Activated T-helper 1 cell treated with anti-CD3 and anti-CD28 coated beads, Interleukin-12 subunit alpha, Interleukin-12 subunit beta, Interleukin-2, Interleukin-4 antibody, amounts not matched to agents 30 ng/mL and 10 ng/mL and 1 ng/mL, durations not matched to agents 14 hours and 24 hours and 36 hours (primary cell): ENCODE measurements at regions of chr7 and their contacts with region 1.

Region 1: DNA sequence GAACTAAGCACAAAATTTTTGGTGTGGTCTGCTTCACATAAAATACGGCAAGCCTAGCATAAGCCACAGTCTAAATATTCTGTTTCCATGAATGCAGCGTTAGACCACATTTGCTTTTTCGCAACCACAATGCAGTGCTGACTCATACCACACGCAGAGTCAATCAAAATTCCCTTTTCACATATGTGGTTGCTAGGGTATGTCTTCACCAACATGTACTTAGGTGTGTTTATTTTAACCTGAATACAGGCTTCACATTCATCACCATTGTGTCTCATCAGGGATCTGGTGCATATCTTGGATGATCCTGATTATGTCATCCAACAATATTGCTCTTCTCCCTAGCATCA is 90.8 kb downstream of the CHN2 start:
- DNase-seq: peak; percentile 55
- H3K4me3 Mint-ChIP-seq: no peak overlapping the region
- H3K27ac Mint-ChIP-seq: peak overlapping the region; percentile 1
- H3K4me1 Mint-ChIP-seq: peaks cover 23% of the 10 kb centered on the region
- H3K27me3 Mint-ChIP-seq: peaks cover 41% of the 10 kb centered on the region

Region 2: GRCh38 chr7:29113384-29114103 is 171.9 kb before region 1 on chr7:
- intact Hi-C with region 1: loop called (anchors 2 kb)
- DNase-seq: no peak
- H3K4me3 Mint-ChIP-seq: no peak overlapping the region
- H3K27ac Mint-ChIP-seq: peak overlapping the region; percentile 44
- H3K4me1 Mint-ChIP-seq: peaks cover 12% of the 10 kb centered on the region
- H3K27me3 Mint-ChIP-seq: peaks cover 24% of the 10 kb centered on the region

Region 3: GRCh38 chr7:29194594-29195427 is 90.6 kb before region 1 on chr7 and contains the start of gene CHN2:
- intact Hi-C with region 1: loop called (anchors 5 kb)
- DNase-seq: peak; percentile 12
- H3K4me3 Mint-ChIP-seq: peak within 1 kb of the TSS; percentile 78
- H3K27ac Mint-ChIP-seq: no peak within 1 kb of the TSS
- H3K4me1 Mint-ChIP-seq: peaks cover 18% of the 10 kb centered on the region
- H3K27me3 Mint-ChIP-seq: peaks cover 66% of the 10 kb centered on the region
- total RNA-seq, gene CHN2: not detected in 2 replicates

Region 4: DNA sequence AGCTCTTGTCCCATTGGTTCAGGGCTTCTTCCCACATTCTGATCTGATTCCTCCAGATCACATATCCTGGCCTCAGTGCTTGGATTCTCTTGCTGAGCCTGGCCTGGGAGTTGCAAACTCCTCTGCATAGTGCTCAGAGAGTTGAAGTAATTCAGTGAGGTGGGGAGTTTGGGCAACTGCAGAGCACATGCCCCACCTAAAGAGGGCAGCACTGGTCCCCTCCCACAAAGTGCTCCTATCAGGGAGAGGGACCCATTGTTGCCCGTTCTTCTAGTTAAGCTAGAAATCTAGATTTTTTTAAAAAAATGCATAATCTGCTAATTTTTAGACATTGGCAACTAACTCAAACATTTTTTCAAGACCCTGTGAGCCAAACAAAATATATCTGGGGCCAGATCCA is 45.8 kb before region 1 on chr7:
- intact Hi-C with region 1: loop called (anchors 1 kb)
- DNase-seq: no peak
- H3K4me3 Mint-ChIP-seq: no peak overlapping the region
- H3K27ac Mint-ChIP-seq: no peak overlapping the region
- H3K4me1 Mint-ChIP-seq: peaks cover 13% of the 10 kb centered on the region
- H3K27me3 Mint-ChIP-seq: peaks cover 28% of the 10 kb centered on the region

Region 5: GRCh38 chr7:29265208-29265923 is 20.1 kb before region 1 on chr7:
- intact Hi-C with region 1: loop called (anchors 1 kb)
- DNase-seq: no peak
- H3K4me3 Mint-ChIP-seq: no peak overlapping the region
- H3K27ac Mint-ChIP-seq: no peak overlapping the region
- H3K4me1 Mint-ChIP-seq: peaks cover 8% of the 10 kb centered on the region
- H3K27me3 Mint-ChIP-seq: peaks cover 9% of the 10 kb centered on the region

Region 6: GRCh38 chr7:29274146-29275017 is 11.0 kb before region 1 on chr7:
- intact Hi-C with region 1: loop called (anchors 1 kb)
- DNase-seq: no peak
- H3K4me3 Mint-ChIP-seq: no peak overlapping the region
- H3K27ac Mint-ChIP-seq: no peak overlapping the region
- H3K4me1 Mint-ChIP-seq: peaks cover 17% of the 10 kb centered on the region
- H3K27me3 Mint-ChIP-seq: peaks cover 17% of the 10 kb centered on the region